Activated CD8-positive, alpha-beta memory T cell treated with anti-CD3 and anti-CD28 coated beads, Interleukin-2, amount 10 ng/mL, durations not matched to agents 7 days and 5 days (primary cell): ENCODE measurements at regions of chr20 and their contacts with region 1.

Region 1: GRCh38 chr20:62953839-62954703 is 1.6 kb downstream of the SLC17A9 start:
- DNase-seq: peak; percentile 90
- ATAC-seq: peak; percentile 81
- H3K4me3 Mint-ChIP-seq: peak overlapping the region; percentile 75
- H3K27ac Mint-ChIP-seq: peak overlapping the region; percentile 89
- H3K4me1 Mint-ChIP-seq: peaks cover 22% of the 10 kb centered on the region
- H3K27me3 Mint-ChIP-seq: no peaks in the 10 kb centered on the region

Region 2: DNA sequence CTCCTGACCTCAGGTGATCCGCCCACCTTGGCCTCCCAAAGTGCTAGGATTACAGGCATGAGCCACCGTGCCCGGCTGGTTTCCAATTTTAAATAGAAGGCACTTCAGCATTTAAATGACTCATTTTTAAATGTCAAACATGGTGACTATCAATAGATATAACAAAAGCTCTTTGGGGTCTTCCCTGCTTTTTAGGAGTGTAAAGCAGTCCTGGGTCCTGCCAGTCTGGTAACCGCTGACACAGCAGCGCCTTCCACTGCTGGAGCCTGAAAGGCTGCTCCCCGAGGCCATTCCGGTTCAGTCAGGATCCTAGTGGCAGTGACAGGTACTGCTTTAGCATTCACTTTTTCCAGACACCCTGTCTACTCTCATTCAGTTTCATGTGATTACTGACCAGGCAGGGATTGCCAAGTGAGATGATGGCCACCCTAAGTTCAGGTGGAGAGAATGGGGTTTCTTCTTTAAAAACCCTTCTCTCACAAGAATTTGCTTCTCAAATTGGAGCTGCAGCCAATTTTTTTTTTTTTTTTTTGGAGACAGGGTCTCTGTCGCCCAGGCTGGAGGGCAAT is 32.9 kb before region 1 on chr20:
- CTCF ChIA-PET with region 1: interaction called, 10 read pairs
- DNase-seq: peak; percentile 82
- ATAC-seq: peak; percentile 57
- H3K4me3 Mint-ChIP-seq: peak overlapping the region; percentile 56
- H3K27ac Mint-ChIP-seq: peak overlapping the region; percentile 89
- H3K4me1 Mint-ChIP-seq: peaks cover 75% of the 10 kb centered on the region
- H3K27me3 Mint-ChIP-seq: no peaks in the 10 kb centered on the region